ENCODE measurements at regions of chr13 and their contacts with region 1.

Region 1: GRCh38 chr13:35630551-35631275 is 154.2 kb upstream of the MAB21L1 start:
- DNase-seq: peak; percentile 13
- H3K4me3 ChIP-seq: no peak overlapping the region
- H3K27ac ChIP-seq: no peak overlapping the region
- H3K4me1 ChIP-seq: peaks cover 11% of the 10 kb centered on the region
- H3K27me3 ChIP-seq: no peaks in the 10 kb centered on the region
- CTCF ChIP-seq: peak; percentile 66 to 73
- POLR2A ChIP-seq: no peak

Region 2: GRCh38 chr13:35643625-35644024 is 12.9 kb after region 1 on chr13:
- CTCF ChIA-PET with region 1: interaction called, 14 read pairs
- POLR2A ChIA-PET with region 1: no interaction called
- dilution Hi-C with region 1: no loop called
- intact Hi-C with region 1: no loop called
- DNase-seq: no peak
- H3K4me3 ChIP-seq: no peak overlapping the region
- H3K27ac ChIP-seq: no peak overlapping the region
- H3K4me1 ChIP-seq: no peaks in the 10 kb centered on the region
- H3K27me3 ChIP-seq: peaks cover 0 to 3% of the 10 kb centered on the region in 2 experiments
- CTCF ChIP-seq: no peak
- POLR2A ChIP-seq: no peak